Calu3 (cell line): ENCODE measurements at regions of chr4 and their contacts with region 1.

Region 1: GRCh38 chr4:96352051-96352517 is 512.2 kb downstream of the PDHA2 start:
- DNase-seq: peak; percentile 36
- H3K4me3 Mint-ChIP-seq: no peak overlapping the region
- H3K27ac Mint-ChIP-seq: no peak overlapping the region
- H3K4me1 Mint-ChIP-seq: peaks cover 8% of the 10 kb centered on the region
- H3K27me3 Mint-ChIP-seq: no peaks in the 10 kb centered on the region
- CTCF ChIP-seq: no peak

Region 2: GRCh38 chr4:95155759-95156451 is 1196.2 kb before region 1 on chr4:
- CTCF ChIA-PET with region 1: interaction called, 3 read pairs
- intact Hi-C with region 1: loop called (anchors 1 kb)
- DNase-seq: no peak
- H3K4me3 Mint-ChIP-seq: no peak overlapping the region
- H3K27ac Mint-ChIP-seq: no peak overlapping the region
- H3K4me1 Mint-ChIP-seq: no peaks in the 10 kb centered on the region
- H3K27me3 Mint-ChIP-seq: no peaks in the 10 kb centered on the region
- CTCF ChIP-seq: peak; percentile 30

Region 3: GRCh38 chr4:95693594-95693993 is 658.5 kb before region 1 on chr4:
- CTCF ChIA-PET with region 1: no interaction called
- intact Hi-C with region 1: loop called (anchors 2 kb)
- DNase-seq: peak; percentile 2
- H3K4me3 Mint-ChIP-seq: no peak overlapping the region
- H3K27ac Mint-ChIP-seq: no peak overlapping the region
- H3K4me1 Mint-ChIP-seq: no peaks in the 10 kb centered on the region
- H3K27me3 Mint-ChIP-seq: no peaks in the 10 kb centered on the region
- CTCF ChIP-seq: no peak

Region 4: DNA sequence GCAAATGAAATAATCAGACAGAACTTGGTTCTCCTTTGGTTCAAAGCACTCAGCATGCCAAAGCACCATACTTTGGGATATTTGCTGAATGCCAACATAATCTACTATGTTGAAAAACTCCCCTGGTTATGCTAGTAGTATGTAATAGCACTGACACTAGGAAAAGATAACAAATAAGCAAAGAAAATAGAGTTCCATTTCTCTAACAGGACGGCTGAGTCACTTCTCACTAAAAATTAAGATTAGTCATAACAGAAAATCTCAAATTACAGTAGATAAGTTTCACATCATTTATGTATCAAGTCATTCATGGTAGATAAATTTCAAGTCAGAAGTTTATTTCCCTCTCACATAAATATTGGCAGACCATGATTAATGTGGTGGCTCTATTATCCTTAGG is 494.3 kb before region 1 on chr4:
- CTCF ChIA-PET with region 1: no interaction called
- intact Hi-C with region 1: loop called (anchors 10 kb)
- DNase-seq: no peak
- H3K4me3 Mint-ChIP-seq: no peak overlapping the region
- H3K27ac Mint-ChIP-seq: no peak overlapping the region
- H3K4me1 Mint-ChIP-seq: peaks cover 15% of the 10 kb centered on the region
- H3K27me3 Mint-ChIP-seq: no peaks in the 10 kb centered on the region
- CTCF ChIP-seq: no peak

Region 5: GRCh38 chr4:96379524-96379923 is 27.4 kb after region 1 on chr4:
- CTCF ChIA-PET with region 1: no interaction called
- intact Hi-C with region 1: no loop called
- DNase-seq: no peak
- H3K4me3 Mint-ChIP-seq: no peak overlapping the region
- H3K27ac Mint-ChIP-seq: no peak overlapping the region
- H3K4me1 Mint-ChIP-seq: no peaks in the 10 kb centered on the region
- H3K27me3 Mint-ChIP-seq: no peaks in the 10 kb centered on the region
- CTCF ChIP-seq: no peak